CD8-positive, alpha-beta T cell (primary cell): ENCODE measurements at regions of chr1 and their contacts with region 1.

Region 1: DNA sequence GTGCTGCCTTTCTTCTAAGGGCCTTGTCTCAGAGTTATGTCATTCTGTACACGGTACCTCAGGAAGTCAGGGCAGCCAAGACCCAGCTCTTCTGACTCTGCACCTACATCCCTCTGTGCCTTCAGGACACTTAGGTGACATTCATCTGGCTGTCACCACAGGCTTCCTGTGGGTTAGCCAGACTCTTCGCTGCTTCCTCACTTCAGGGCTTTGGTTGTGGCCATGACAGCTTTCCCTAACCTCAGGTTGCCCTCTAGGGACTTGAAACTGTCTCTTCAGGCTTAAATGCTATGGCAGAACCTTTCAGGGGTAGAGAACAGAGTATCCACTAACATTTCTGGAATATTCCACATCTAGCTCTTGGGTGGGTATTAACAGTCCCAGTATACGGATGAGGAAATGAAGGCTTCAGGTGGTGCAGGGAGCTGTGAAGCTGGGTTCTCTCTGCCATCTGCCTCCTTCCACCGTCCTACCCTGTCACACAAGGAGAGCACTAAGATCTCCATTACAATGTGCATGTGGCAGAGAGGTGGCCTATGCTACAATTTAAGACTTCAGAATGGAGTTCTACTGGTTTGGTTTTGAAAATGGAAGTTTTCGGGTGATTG is 9.9 kb downstream of the TSSK3 start:
- DNase-seq: peak in 8 of 9 experiments; percentile 27 to 88 (median 67)
- ATAC-seq: peak; percentile 93
- H3K4me3 ChIP-seq: no peak overlapping the region
- H3K4me3 Mint-ChIP-seq: no peak overlapping the region
- H3K27ac ChIP-seq: peak overlapping the region in 1 of 2 experiments; percentile 11
- H3K27ac Mint-ChIP-seq: peak overlapping the region; percentile 78
- H3K4me1 ChIP-seq: peaks cover 11% of the 10 kb centered on the region
- H3K4me1 Mint-ChIP-seq: peaks cover 14% of the 10 kb centered on the region
- H3K27me3 ChIP-seq: no peaks in the 10 kb centered on the region
- H3K27me3 Mint-ChIP-seq: no peaks in the 10 kb centered on the region
- CTCF ChIP-seq: no peak

Region 2: DNA sequence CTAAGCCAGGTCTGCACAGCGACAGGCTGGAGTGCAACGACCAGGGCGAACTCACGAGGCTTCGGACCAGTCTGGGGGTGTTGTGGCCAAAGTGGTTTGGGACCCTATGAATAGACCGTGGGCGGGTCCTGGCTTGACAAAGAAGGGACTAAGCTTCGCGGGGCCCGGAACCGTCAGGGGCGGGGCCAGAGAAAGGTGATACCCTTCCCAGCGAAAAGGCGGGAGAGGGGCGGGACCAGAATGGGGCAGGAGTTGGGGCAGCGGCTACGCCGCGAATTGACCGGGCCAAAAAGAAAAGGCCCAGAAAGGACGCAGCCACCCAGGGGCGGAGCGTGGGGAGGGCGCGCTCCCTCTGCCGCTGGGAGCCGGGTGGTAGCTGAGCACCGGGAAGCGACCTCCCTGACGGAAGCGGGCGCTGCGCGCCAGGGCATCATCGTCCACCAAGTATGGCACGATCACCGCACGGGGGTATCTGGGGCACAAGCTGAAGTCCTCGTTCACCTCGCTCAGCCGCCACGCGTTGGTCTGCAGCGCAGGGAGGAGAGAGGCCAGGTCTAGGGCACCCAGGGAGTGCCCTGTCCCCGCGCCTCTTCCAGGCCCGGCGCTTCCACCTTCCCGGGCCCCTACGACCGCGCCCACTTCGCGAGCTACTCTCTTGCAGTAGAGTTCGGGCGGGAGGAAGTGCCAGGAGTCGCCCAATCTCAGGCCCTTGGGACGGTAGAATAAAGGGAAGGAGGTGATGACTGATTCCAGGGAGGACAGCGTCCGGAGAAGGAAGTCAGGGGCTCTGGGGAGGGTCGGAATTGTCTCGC is 131.9 kb before region 1 on chr1:
- CTCF ChIA-PET with region 1: interaction called, 13 read pairs
- POLR2A ChIA-PET with region 1: no interaction called
- intact Hi-C with region 1: loop called in 1 of 2 experiments (anchors 1 kb)
- DNase-seq: peak in 8 of 9 experiments; percentile 26 to 85 (median 76)
- ATAC-seq: peak; percentile 69
- H3K4me3 ChIP-seq: peak overlapping the region; percentile 76 to 89
- H3K4me3 Mint-ChIP-seq: peak overlapping the region; percentile 90
- H3K27ac ChIP-seq: peak overlapping the region; percentile 22 to 49
- H3K27ac Mint-ChIP-seq: peak overlapping the region; percentile 62
- H3K4me1 ChIP-seq: peaks cover 26% of the 10 kb centered on the region
- H3K4me1 Mint-ChIP-seq: peaks cover 23% of the 10 kb centered on the region
- H3K27me3 ChIP-seq: no peaks in the 10 kb centered on the region
- H3K27me3 Mint-ChIP-seq: no peaks in the 10 kb centered on the region
- CTCF ChIP-seq: peak; percentile 24

Region 3: GRCh38 chr1:32321712-32322291 is 50.5 kb before region 1 on chr1:
- CTCF ChIA-PET with region 1: interaction called, 17 read pairs
- POLR2A ChIA-PET with region 1: no interaction called
- intact Hi-C with region 1: no loop called
- DNase-seq: peak in 7 of 9 experiments; percentile 11 to 72 (median 43)
- ATAC-seq: peak; percentile 87
- H3K4me3 ChIP-seq: peak overlapping the region in 1 of 2 experiments; percentile 6
- H3K4me3 Mint-ChIP-seq: peak overlapping the region; percentile 56
- H3K27ac ChIP-seq: peak overlapping the region; percentile 29 to 41
- H3K27ac Mint-ChIP-seq: peak overlapping the region; percentile 81
- H3K4me1 ChIP-seq: peaks cover 38% of the 10 kb centered on the region
- H3K4me1 Mint-ChIP-seq: peaks cover 38% of the 10 kb centered on the region
- H3K27me3 ChIP-seq: no peaks in the 10 kb centered on the region
- H3K27me3 Mint-ChIP-seq: no peaks in the 10 kb centered on the region
- CTCF ChIP-seq: no peak

Region 4: GRCh38 chr1:32351399-32352238 is 20.6 kb before region 1 on chr1:
- CTCF ChIA-PET with region 1: interaction called, 3 read pairs
- POLR2A ChIA-PET with region 1: interaction called, 6 read pairs
- intact Hi-C with region 1: loop called in 1 of 2 experiments (anchors 1 kb)
- DNase-seq: peak; percentile 81 to 97 (median 90)
- ATAC-seq: peak; percentile 95
- H3K4me3 ChIP-seq: peak overlapping the region; percentile 57 to 85
- H3K4me3 Mint-ChIP-seq: peak overlapping the region; percentile 81
- H3K27ac ChIP-seq: peak overlapping the region; percentile 60 to 69
- H3K27ac Mint-ChIP-seq: peak overlapping the region; percentile 49
- H3K4me1 ChIP-seq: peaks cover 30% of the 10 kb centered on the region
- H3K4me1 Mint-ChIP-seq: peaks cover 49% of the 10 kb centered on the region
- H3K27me3 ChIP-seq: no peaks in the 10 kb centered on the region
- H3K27me3 Mint-ChIP-seq: no peaks in the 10 kb centered on the region
- CTCF ChIP-seq: no peak

Region 5: DNA sequence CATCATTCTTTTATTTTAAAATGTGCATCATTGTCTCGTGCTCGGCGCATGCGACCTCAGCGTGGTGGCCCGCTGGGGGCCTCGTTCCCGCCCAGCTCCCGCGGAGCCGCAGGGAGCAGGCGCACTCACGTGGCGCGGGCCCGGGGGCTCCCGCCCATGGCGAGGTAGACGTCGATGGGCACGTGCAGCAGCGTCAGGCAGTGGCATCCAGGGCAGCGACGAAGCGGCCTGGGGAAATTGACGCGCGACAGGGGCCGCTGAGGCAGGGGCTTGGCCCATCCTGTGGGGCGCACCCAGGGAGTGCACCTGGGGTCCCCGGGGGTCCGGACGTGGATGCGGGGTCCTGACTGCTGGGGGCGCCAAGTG is 11.0 kb before region 1 on chr1:
- CTCF ChIA-PET with region 1: interaction called, 12 read pairs
- POLR2A ChIA-PET with region 1: no interaction called
- intact Hi-C with region 1: no loop called
- DNase-seq: peak in 1 of 9 experiments; percentile 26
- ATAC-seq: no peak
- H3K4me3 ChIP-seq: no peak overlapping the region
- H3K4me3 Mint-ChIP-seq: peak overlapping the region; percentile 82
- H3K27ac ChIP-seq: no peak overlapping the region
- H3K27ac Mint-ChIP-seq: peak overlapping the region; percentile 46
- H3K4me1 ChIP-seq: peaks cover 21% of the 10 kb centered on the region
- H3K4me1 Mint-ChIP-seq: peaks cover 22% of the 10 kb centered on the region
- H3K27me3 ChIP-seq: no peaks in the 10 kb centered on the region
- H3K27me3 Mint-ChIP-seq: no peaks in the 10 kb centered on the region
- CTCF ChIP-seq: no peak

Region 6: GRCh38 chr1:32855861-32856617 is 483.8 kb after region 1 on chr1:
- CTCF ChIA-PET with region 1: no interaction called
- POLR2A ChIA-PET with region 1: no interaction called
- intact Hi-C with region 1: no loop called
- DNase-seq: no peak
- ATAC-seq: no peak
- H3K4me3 ChIP-seq: no peak overlapping the region
- H3K4me3 Mint-ChIP-seq: no peak overlapping the region
- H3K27ac ChIP-seq: no peak overlapping the region
- H3K27ac Mint-ChIP-seq: no peak overlapping the region
- H3K4me1 ChIP-seq: no peaks in the 10 kb centered on the region
- H3K4me1 Mint-ChIP-seq: no peaks in the 10 kb centered on the region
- H3K27me3 ChIP-seq: no peaks in the 10 kb centered on the region
- H3K27me3 Mint-ChIP-seq: no peaks in the 10 kb centered on the region
- CTCF ChIP-seq: no peak